HepG2 (cell line): ENCODE measurements at regions of chr9 and their contacts with region 1.

Region 1: DNA sequence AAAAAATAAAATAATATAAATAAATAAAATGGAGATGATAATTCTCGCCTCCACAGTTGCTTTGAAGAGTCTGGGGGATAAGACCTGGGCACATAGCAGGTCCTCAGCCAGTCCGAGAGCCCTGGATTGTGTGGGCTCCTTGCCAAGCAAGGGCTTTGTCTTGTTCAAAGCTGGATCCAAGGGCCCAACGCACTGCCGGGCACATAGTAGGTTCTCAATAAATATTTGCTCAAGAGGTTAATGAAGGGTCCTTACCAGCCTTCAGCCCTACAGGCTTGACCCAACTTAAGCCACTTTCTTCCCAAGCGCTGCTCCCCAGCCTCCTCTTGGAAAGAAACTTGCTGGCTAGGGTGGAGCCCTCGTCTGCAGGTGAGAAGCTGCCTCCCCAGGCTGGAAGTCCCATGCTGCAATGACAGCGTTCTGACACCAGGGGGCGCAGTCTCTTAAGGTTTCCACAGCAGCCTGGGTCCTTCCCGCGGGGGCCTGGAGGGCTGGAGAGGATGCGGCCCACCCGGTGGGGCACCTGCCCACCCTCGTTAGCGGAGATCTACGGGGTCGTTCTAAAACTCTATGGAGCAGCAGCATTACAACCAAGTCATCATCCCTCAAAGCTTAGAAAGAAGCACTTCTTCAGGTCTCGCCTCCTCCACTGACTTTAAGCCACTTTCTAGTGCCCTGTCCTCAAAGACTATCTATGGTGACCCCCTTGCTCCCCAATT is 115.2 kb downstream of the LHX2 start:
- DNase-seq: peak; percentile 56
- ATAC-seq: peak; percentile 69
- H3K4me3 ChIP-seq: no peak overlapping the region
- H3K27ac ChIP-seq: no peak overlapping the region
- H3K4me1 ChIP-seq: peaks cover 20% of the 10 kb centered on the region
- H3K27me3 ChIP-seq: peaks cover 2 to 13% of the 10 kb centered on the region in 2 experiments; a peak in 3 of 5 replicates
- CTCF ChIP-seq: peak; percentile 97
- EP300 ChIP-seq: no peak
- POLR2A ChIP-seq: no peak
- RAD21 ChIP-seq: peak; percentile 90

Region 2: DNA sequence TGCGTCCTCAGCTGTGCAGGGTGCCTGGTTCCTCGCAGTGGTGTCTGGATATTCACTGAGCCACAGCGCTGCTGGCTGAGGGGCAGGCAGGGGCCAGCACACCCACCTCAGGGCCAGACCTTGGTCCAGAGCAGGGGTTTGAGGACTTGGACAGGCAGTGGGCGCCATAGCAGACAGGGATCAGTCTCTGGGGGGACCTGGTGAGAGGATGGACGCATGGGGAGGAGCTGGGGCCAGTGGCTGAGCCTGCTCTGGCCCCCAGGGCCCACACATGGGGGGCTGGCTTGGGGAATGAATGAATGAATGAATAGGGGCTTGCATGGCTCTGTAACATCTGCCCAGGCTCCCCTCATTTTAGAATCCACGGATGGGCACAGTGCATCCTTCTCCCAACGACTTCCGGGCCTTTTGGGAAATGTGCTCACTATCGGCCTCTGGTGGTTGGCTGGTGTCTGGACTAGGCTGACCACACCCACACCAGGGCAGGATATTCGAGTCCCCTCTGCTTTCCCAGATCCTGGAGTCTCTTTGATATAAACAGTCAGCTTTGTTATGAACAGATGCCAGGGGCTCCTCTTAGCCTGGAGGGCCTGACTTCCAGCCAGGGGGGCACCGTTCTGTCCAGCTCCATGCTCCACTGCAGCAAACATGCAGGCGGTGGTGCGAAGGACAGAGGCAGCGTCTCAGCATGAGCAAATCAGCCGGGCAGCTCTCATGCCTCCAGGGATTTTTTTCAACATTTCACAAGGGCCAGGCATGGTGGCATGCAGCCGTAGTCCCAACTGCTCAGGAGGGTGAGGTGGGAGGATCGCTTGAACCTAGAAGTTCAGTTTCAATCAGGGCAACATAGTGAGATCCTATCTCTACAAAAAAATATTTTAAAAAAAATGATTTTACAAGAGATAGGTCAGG is 193.6 kb after region 1 on chr9:
- CTCF ChIA-PET with region 1: interaction called, 27 read pairs
- POLR2A ChIA-PET with region 1: no interaction called
- in situ Hi-C with region 1: loop called (anchors 5 kb)
- intact Hi-C with region 1: no loop called
- DNase-seq: peak; percentile 47
- ATAC-seq: peak; percentile 85
- H3K4me3 ChIP-seq: no peak overlapping the region
- H3K27ac ChIP-seq: no peak overlapping the region
- H3K4me1 ChIP-seq: no peaks in the 10 kb centered on the region
- H3K27me3 ChIP-seq: no peaks in the 10 kb centered on the region
- CTCF ChIP-seq: peak; percentile 82
- EP300 ChIP-seq: no peak
- POLR2A ChIP-seq: no peak
- RAD21 ChIP-seq: peak; percentile 48

Region 3: GRCh38 chr9:124357721-124358361 is 231.1 kb after region 1 on chr9:
- CTCF ChIA-PET with region 1: no interaction called
- POLR2A ChIA-PET with region 1: no interaction called
- in situ Hi-C with region 1: no loop called
- intact Hi-C with region 1: no loop called
- DNase-seq: no peak
- ATAC-seq: peak; percentile 28
- H3K4me3 ChIP-seq: no peak overlapping the region
- H3K27ac ChIP-seq: peak overlapping the region; percentile 17
- H3K4me1 ChIP-seq: peaks cover 20% of the 10 kb centered on the region
- H3K27me3 ChIP-seq: no peaks in the 10 kb centered on the region
- CTCF ChIP-seq: peak; percentile 50
- EP300 ChIP-seq: no peak
- POLR2A ChIP-seq: peak in 1 of 2 experiments; percentile 32; a peak in 1 of 4 replicates
- RAD21 ChIP-seq: no peak

Region 4: GRCh38 chr9:124450241-124450924 is 323.7 kb after region 1 on chr9 and contains the start of gene ADGRD2:
- CTCF ChIA-PET with region 1: no interaction called
- POLR2A ChIA-PET with region 1: no interaction called
- in situ Hi-C with region 1: no loop called
- intact Hi-C with region 1: no loop called
- DNase-seq: no peak
- ATAC-seq: 0 out of 3 replicates have a peak, but pooled peaks have one; percentile 9
- H3K4me3 ChIP-seq: no peak within 1 kb of the TSS; a peak in 1 of 6 replicates
- H3K27ac ChIP-seq: no peak within 1 kb of the TSS
- H3K4me1 ChIP-seq: peaks cover 10% of the 10 kb centered on the region; the same call in 1 of the 2 replicates
- H3K27me3 ChIP-seq: peaks cover 14 to 38% of the 10 kb centered on the region in 2 experiments; a peak in 3 of 5 replicates
- CTCF ChIP-seq: no peak
- EP300 ChIP-seq: no peak
- POLR2A ChIP-seq: no peak
- RAD21 ChIP-seq: no peak
- total RNA-seq, gene ADGRD2: not detected in 2 replicates